Tibial artery (tissue), 4 donors: ENCODE measurements at regions of chr10 and their contacts with region 1.

Region 1: GRCh38 chr10:22931948-22932347 is 4.1 kb downstream of the ARMC3 start:
- DNase-seq: no peak
- H3K4me3 ChIP-seq: no peak overlapping the region
- H3K27ac ChIP-seq: peak overlapping the region; percentile 26 to 46
- H3K4me1 ChIP-seq: peaks cover 0 to 31% (median 7%) of the 10 kb centered on the region in 4 donors
- H3K27me3 ChIP-seq: peaks cover 0 to 5% of the 10 kb centered on the region in 2 donors
- CTCF ChIP-seq: no peak

Region 2: GRCh38 chr10:22086730-22087389 is 845.1 kb before region 1 on chr10:
- intact Hi-C with region 1: loop called (anchors 5 kb)
- DNase-seq: peak; percentile 76 to 87
- H3K4me3 ChIP-seq: no peak overlapping the region
- H3K27ac ChIP-seq: no peak overlapping the region
- H3K4me1 ChIP-seq: peaks cover 0 to 5% (median 0%) of the 10 kb centered on the region in 4 donors
- H3K27me3 ChIP-seq: no peaks in the 10 kb centered on the region
- CTCF ChIP-seq: no peak

Region 3: GRCh38 chr10:22531441-22531840 is 400.5 kb before region 1 on chr10:
- intact Hi-C with region 1: no loop called
- DNase-seq: no peak
- H3K4me3 ChIP-seq: no peak overlapping the region
- H3K27ac ChIP-seq: no peak overlapping the region
- H3K4me1 ChIP-seq: no peaks in the 10 kb centered on the region
- H3K27me3 ChIP-seq: no peaks in the 10 kb centered on the region
- CTCF ChIP-seq: no peak

Region 4: GRCh38 chr10:22727663-22728062 is 204.3 kb before region 1 on chr10:
- intact Hi-C with region 1: no loop called
- DNase-seq: no peak
- H3K4me3 ChIP-seq: no peak overlapping the region
- H3K27ac ChIP-seq: no peak overlapping the region
- H3K4me1 ChIP-seq: no peaks in the 10 kb centered on the region
- H3K27me3 ChIP-seq: no peaks in the 10 kb centered on the region
- CTCF ChIP-seq: no peak

Region 5: DNA sequence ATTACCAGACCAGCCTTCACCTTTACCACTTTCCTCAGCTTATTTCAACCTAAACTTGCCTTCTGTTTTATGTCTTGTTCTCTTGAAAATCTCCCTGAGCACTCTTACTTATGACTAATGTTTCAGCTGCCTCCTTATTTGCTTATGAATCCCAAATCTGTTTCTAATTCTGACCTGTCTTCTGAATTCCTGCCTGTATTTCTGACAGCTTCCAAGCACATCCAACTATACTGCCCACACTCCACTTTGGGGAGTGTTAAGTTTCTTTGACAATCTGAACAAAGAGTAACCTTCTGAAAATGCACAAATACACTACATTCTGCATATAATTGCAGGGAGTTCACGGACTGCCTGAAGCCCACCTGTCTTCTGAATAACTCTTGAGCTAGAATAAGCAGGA is 44.6 kb after region 1 on chr10:
- intact Hi-C with region 1: no loop called
- DNase-seq: no peak
- H3K4me3 ChIP-seq: no peak overlapping the region
- H3K27ac ChIP-seq: no peak overlapping the region
- H3K4me1 ChIP-seq: no peaks in the 10 kb centered on the region
- H3K27me3 ChIP-seq: no peaks in the 10 kb centered on the region
- CTCF ChIP-seq: no peak